B cell (primary cell): ENCODE measurements at regions of chr11 and their contacts with region 1.

Region 1: DNA sequence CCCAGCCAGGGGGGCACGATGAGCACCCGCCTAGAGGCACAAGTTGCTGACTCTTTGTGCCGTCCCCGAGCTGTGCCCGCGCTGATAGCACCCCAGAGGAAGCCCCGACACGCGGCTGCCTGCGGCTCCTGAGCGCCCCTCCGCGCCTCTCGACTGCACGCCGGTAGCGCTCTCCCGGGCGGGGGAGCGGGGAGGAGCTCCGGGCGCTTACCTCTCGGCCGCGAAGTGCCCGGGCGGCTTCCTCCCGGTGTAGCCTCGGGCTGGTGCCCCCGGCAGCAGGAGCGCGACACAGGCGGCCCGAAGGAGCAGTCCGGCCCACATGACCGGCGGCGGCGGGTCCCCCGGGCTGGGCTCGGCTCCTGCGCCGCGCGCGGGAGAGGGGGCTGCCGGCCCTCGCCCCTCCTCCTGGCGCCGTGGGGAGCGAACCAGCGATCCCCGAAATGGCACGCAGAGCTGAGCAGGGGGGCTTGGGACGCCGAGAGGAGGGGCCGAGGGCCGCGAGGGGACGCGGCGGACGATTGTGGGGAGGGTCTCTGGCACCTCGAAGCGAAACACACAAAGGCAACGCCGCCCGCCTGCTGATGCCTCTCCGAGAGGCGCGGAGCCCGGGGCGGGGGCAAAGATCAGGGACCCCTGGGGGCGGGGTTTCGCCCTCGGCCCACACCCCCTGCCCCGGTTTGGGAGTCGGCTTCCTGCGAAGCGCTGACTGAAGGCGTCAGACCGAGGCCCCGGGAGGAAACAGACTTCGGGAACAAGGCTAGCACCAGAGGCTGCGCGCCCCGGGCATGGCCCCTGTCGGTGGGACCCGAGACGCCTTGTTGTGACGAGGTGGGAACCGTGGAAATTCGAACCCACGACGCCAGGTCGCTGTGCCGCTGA is at the start of gene VWCE:
- DNase-seq: peak; percentile 78
- ATAC-seq: peak; percentile 84
- H3K4me3 ChIP-seq: peak within 1 kb of the TSS; percentile 26 to 74 (median 54)
- H3K4me3 Mint-ChIP-seq: peak within 1 kb of the TSS; percentile 88
- H3K27ac ChIP-seq: no peak within 1 kb of the TSS
- H3K27ac Mint-ChIP-seq: peak within 1 kb of the TSS; percentile 37
- H3K4me1 ChIP-seq: peaks cover 8 to 21% of the 10 kb centered on the region in 2 donors
- H3K4me1 Mint-ChIP-seq: peaks cover 14% of the 10 kb centered on the region
- H3K27me3 ChIP-seq: no peaks in the 10 kb centered on the region
- H3K27me3 Mint-ChIP-seq: no peaks in the 10 kb centered on the region
- CTCF ChIP-seq: peak; percentile 33
- total RNA-seq, gene VWCE: 0.37 and 0.41 TPM in 2 replicates

Region 2: DNA sequence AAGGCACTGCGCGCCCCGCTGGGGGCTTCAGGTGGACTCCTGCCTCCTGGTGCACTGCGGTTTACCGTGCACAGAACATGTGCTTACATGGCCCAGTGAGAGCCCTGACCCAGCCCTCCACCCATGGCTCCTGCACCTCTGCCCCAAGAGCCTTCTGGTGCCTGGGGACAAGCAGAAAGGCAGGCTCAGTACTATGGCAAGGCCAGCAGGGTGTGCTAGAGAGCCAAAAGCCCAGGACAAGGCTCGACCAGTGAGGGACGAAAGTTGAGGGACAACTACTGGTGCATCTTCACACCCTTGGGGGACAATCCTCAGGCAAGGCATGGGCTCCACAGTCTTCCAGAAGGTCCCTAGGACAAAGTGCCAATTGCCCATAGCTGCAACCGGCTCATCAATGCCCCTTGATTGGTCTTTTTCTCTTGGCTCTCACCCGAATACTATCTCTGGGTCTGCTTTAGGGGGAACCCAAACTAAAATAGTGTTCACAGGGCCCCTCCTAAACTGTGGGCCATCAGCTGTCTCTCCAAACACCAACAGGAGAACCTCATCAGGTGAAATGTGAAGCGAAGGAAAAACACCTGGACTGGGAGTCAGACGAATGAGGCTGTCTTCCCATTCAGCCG is 40.4 kb before region 1 on chr11:
- CTCF ChIA-PET with region 1: interaction called, 6 read pairs
- POLR2A ChIA-PET with region 1: no interaction called
- intact Hi-C with region 1: loop called (anchors 1 kb)
- DNase-seq: peak; percentile 71
- ATAC-seq: peak; percentile 84
- H3K4me3 ChIP-seq: no peak overlapping the region
- H3K4me3 Mint-ChIP-seq: no peak overlapping the region
- H3K27ac ChIP-seq: no peak overlapping the region
- H3K27ac Mint-ChIP-seq: no peak overlapping the region
- H3K4me1 ChIP-seq: no peaks in the 10 kb centered on the region
- H3K4me1 Mint-ChIP-seq: no peaks in the 10 kb centered on the region
- H3K27me3 ChIP-seq: no peaks in the 10 kb centered on the region
- H3K27me3 Mint-ChIP-seq: no peaks in the 10 kb centered on the region
- CTCF ChIP-seq: peak; percentile 82